ENCODE measurements at regions of chr1 and their contacts with region 1.

Region 1: GRCh38 chr1:41573785-41574713 is 89.6 kb upstream of the EDN2 start:
- DNase-seq: peak; percentile 80
- H3K4me3 ChIP-seq: no peak overlapping the region
- H3K27ac ChIP-seq: no peak overlapping the region
- H3K4me1 ChIP-seq: peaks cover 10% of the 10 kb centered on the region
- CTCF ChIP-seq: peak; percentile 91

Region 2: DNA sequence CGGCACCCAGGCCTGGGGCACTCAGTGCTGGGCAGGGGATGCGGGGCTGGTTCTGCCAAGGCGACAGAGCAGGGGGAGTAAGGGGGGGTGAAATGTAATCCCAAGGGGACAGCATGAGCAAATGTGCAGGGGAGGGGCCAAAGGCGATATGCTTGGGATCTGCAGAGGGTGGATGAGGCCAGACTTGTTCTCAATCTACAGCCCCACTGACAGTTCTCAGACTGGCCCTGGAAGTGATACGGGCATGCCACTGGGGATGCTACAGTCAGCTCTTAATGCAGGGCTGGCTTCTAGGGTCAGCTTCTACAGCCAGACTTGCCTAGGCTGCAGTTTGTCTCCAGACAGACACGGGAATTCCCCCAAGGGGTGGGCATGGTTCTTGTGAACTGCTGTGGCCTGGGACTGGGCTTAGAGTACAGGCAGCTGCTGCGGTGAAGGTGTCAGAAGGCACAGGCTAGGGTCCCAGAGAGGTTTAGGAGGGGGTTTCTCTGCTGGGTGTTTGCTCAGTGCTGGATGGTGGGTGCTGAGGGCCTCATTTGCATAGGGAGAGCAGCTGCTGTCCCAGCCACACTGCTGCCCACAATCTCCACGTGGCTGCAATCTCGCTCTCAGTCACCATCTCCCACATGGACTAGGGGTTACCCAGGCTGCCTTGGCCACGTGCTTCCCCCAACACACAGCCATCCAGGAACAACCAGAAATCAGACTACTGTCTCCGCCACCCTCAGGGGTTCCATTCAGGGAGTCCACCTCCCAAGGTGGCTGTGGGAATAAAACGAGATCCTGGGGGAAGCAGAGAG is 154.6 kb after region 1 on chr1:
- CTCF ChIA-PET with region 1: no interaction called
- POLR2A ChIA-PET with region 1: no interaction called
- intact Hi-C with region 1: loop called (anchors 2 kb)
- DNase-seq: peak; percentile 33
- H3K4me3 ChIP-seq: no peak overlapping the region
- H3K27ac ChIP-seq: no peak overlapping the region
- H3K4me1 ChIP-seq: peaks cover 35% of the 10 kb centered on the region
- CTCF ChIP-seq: no peak

Region 3: DNA sequence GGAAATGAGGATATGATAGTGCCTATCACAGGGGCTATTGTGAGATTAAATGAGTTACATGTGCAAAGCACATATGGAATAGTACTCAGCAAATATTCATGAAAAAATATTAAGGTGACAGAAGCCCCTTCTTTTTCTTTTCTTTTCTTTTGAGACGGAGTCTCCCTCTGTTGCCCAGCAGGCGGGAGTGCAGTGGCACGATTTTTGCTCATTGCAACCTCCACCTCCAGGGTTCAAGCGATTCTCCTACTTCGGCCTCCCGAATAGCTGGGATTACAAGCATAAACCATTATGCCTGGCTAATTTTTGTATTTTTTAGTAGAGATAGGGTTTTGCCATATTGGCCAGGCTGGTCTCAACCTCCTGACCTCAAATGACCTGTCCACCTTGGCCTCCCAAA is 205.3 kb after region 1 on chr1:
- CTCF ChIA-PET with region 1: no interaction called
- POLR2A ChIA-PET with region 1: no interaction called
- intact Hi-C with region 1: loop called (anchors 1 kb)
- DNase-seq: no peak
- H3K4me3 ChIP-seq: no peak overlapping the region
- H3K27ac ChIP-seq: no peak overlapping the region
- H3K4me1 ChIP-seq: no peaks in the 10 kb centered on the region
- CTCF ChIP-seq: peak; percentile 43; the same call in 1 of the 2 replicates

Region 4: GRCh38 chr1:42035830-42036604 is 462.0 kb after region 1 on chr1:
- CTCF ChIA-PET with region 1: no interaction called
- POLR2A ChIA-PET with region 1: no interaction called
- intact Hi-C with region 1: loop called (anchors 5 kb)
- DNase-seq: peak; percentile 95
- H3K4me3 ChIP-seq: peak overlapping the region; percentile 84
- H3K27ac ChIP-seq: no peak overlapping the region
- H3K4me1 ChIP-seq: peaks cover 14% of the 10 kb centered on the region
- CTCF ChIP-seq: no peak

Region 5: GRCh38 chr1:42173155-42173933 is 599.3 kb after region 1 on chr1:
- CTCF ChIA-PET with region 1: no interaction called
- POLR2A ChIA-PET with region 1: no interaction called
- intact Hi-C with region 1: loop called (anchors 2 kb)
- DNase-seq: peak; percentile 59
- H3K4me3 ChIP-seq: no peak overlapping the region
- H3K27ac ChIP-seq: no peak overlapping the region
- H3K4me1 ChIP-seq: no peaks in the 10 kb centered on the region
- CTCF ChIP-seq: peak; percentile 94